Heart left ventricle (tissue), 16 donors: ENCODE measurements at regions of chr2 and their contacts with region 1.

Region 1: GRCh38 chr2:10382354-10383061 is 65.6 kb downstream of the ODC1 start:
- DNase-seq: peak in 3 of 5 donors; percentile 41 to 56 (median 51)
- ATAC-seq: peak; percentile 52 to 59 (median 54)
- H3K4me3 ChIP-seq: peak overlapping the region in 2 of 12 donors; percentile 5 to 31
- H3K27ac ChIP-seq: peak overlapping the region in 5 of 12 donors; percentile 0 to 60 (median 14)
- H3K4me1 ChIP-seq: peaks cover 3 to 74% (median 40%) of the 10 kb centered on the region in 12 donors
- H3K27me3 ChIP-seq: no peaks in the 10 kb centered on the region
- CTCF ChIP-seq: no peak
- POLR2A ChIP-seq: no peak

Region 2: DNA sequence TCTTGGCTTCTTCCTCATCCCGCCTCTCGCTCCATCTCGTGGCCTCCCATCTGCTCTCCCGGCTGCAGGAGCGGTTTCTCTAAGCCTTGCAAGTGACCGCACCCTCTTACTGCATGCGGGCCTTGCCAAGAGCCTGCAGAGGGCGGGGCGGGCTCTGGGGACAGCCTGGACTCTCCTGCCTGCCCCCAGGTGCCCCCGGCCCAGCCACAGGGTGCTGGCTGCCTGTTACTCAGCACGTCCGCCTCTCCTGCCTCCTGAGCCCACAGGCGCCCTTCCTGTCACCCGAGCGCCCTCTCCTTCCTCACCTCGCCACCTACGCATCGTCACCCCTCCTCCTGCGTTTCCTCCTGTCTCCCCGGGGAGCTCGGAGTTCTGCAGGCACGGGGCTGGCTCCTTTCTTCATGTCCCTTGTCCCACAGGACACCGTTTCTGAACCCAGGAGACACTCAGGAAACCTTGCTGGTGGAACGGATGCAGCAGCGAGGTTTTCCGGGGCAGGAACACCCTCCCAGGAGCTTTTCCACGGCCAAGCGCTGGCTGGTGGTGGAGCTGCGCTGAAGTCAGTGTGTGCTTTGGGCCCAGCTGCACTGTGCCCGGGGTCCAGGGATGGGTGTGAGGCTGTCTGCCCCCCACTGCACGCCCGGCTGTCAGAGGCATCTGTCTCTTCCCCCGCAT is 51.3 kb before region 1 on chr2:
- intact Hi-C with region 1: loop called in 3 of 10 experiments (anchors 5 to 10 kb)
- DNase-seq: peak; percentile 56 to 84 (median 78)
- ATAC-seq: peak; percentile 53 to 77 (median 74)
- H3K4me3 ChIP-seq: peak overlapping the region in 9 of 12 donors; percentile 11 to 50 (median 35)
- H3K27ac ChIP-seq: peak overlapping the region in 11 of 12 donors; percentile 17 to 79 (median 57)
- H3K4me1 ChIP-seq: peaks cover 6 to 72% (median 43%) of the 10 kb centered on the region in 12 donors
- H3K27me3 ChIP-seq: no peaks in the 10 kb centered on the region
- CTCF ChIP-seq: peak in 1 of 12 donors; percentile 15
- POLR2A ChIP-seq: no peak

Region 3: DNA sequence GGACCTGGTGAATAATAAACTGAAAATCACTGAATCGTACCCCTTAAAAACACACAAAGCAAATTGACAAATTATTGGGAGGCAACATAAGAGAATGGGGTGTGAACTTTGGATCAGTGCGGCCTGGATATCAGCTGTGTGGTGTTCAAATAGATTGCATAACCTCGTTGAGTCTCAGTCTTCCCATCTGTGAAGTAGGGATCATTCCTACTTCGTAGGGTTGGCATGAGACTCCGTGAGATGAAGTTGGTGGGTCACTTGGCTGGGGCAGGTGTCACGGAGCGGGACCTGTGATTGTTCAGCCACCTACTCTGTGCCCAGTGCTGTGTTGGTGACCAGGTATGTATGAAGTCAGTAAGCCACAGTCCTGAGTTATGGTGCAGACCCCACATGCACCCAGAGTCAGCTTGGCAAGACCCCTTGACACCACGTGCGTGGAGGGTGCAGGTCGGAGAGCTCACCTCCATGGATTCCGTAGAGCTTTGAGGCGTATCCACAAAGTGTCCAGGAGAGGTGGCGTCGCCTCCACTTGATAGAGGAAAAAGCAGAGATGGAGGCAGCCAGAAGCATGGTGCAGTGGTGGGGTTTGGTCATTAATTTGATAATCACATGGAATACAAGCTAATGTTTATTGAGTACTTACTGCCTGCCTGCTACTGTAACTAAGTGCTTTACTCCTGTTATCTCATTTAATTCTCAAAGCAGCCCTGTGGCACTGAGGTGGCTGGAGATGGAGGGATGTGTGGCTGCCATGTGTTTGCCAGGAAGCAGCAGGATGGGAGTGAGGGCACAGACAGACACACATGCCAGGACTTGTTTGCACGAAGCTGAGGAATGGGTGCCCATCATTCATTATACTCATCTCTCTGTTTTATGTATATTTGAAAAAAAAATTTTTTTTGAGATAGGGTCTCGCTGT is 44.0 kb before region 1 on chr2:
- intact Hi-C with region 1: loop called in 3 of 10 experiments (anchors 5 to 10 kb)
- DNase-seq: no peak
- ATAC-seq: no peak
- H3K4me3 ChIP-seq: no peak overlapping the region
- H3K27ac ChIP-seq: no peak overlapping the region
- H3K4me1 ChIP-seq: peaks cover 0 to 14% (median 0%) of the 10 kb centered on the region in 12 donors
- H3K27me3 ChIP-seq: no peaks in the 10 kb centered on the region
- CTCF ChIP-seq: no peak
- POLR2A ChIP-seq: no peak

Region 4: GRCh38 chr2:10344105-10345066 is 38.1 kb before region 1 on chr2:
- intact Hi-C with region 1: loop called in 3 of 10 experiments (anchors 5 to 10 kb)
- DNase-seq: no peak
- ATAC-seq: no peak
- H3K4me3 ChIP-seq: no peak overlapping the region
- H3K27ac ChIP-seq: no peak overlapping the region
- H3K4me1 ChIP-seq: peaks cover 0 to 56% (median 16%) of the 10 kb centered on the region in 12 donors
- H3K27me3 ChIP-seq: no peaks in the 10 kb centered on the region
- CTCF ChIP-seq: no peak
- POLR2A ChIP-seq: no peak

Region 5: GRCh38 chr2:10538224-10538894 is 155.9 kb after region 1 on chr2:
- intact Hi-C with region 1: no loop called
- DNase-seq: peak in 1 of 5 donors; percentile 1
- ATAC-seq: no peak
- H3K4me3 ChIP-seq: no peak overlapping the region
- H3K27ac ChIP-seq: no peak overlapping the region
- H3K4me1 ChIP-seq: no peaks in the 10 kb centered on the region
- H3K27me3 ChIP-seq: no peaks in the 10 kb centered on the region
- CTCF ChIP-seq: no peak
- POLR2A ChIP-seq: no peak